ENCODE measurements at regions of chr9 and their contacts with region 1.

Region 1: GRCh38 chr9:77433675-77434445 is 214.3 kb downstream of the GNA14 start:
- ATAC-seq: peak; percentile 85 to 98 (median 98)
- H3K4me3 ChIP-seq: no peak overlapping the region
- H3K27ac ChIP-seq: no peak overlapping the region
- H3K4me1 ChIP-seq: no peaks in the 10 kb centered on the region

Region 2: DNA sequence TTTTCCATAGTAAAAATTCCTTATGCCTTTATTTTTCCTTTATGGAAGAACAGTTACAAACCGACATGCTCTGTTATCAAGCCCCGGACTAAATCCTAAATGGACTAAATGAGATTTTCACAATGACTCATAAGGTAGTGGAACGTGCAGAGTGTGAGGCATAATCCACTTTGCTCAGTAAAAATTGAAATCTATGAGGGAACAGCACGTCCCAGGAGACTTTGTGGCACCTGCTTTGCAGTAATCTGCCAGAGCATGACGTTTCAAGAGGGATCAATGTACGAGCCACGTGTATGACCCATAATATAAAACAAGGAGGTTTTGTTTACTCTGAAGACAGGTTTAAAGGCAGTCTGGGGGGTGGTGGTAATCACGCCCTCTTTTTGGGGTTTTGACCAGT is 298.1 kb after region 1 on chr9:
- in situ Hi-C with region 1: loop called in 1 of 9 experiments (anchors 25 kb)
- ATAC-seq: peak in 2 of 8 experiments; percentile 58 to 87
- H3K4me3 ChIP-seq: no peak overlapping the region
- H3K27ac ChIP-seq: no peak overlapping the region
- H3K4me1 ChIP-seq: peaks cover 0 to 3% of the 10 kb centered on the region in 2 donors

Region 3: DNA sequence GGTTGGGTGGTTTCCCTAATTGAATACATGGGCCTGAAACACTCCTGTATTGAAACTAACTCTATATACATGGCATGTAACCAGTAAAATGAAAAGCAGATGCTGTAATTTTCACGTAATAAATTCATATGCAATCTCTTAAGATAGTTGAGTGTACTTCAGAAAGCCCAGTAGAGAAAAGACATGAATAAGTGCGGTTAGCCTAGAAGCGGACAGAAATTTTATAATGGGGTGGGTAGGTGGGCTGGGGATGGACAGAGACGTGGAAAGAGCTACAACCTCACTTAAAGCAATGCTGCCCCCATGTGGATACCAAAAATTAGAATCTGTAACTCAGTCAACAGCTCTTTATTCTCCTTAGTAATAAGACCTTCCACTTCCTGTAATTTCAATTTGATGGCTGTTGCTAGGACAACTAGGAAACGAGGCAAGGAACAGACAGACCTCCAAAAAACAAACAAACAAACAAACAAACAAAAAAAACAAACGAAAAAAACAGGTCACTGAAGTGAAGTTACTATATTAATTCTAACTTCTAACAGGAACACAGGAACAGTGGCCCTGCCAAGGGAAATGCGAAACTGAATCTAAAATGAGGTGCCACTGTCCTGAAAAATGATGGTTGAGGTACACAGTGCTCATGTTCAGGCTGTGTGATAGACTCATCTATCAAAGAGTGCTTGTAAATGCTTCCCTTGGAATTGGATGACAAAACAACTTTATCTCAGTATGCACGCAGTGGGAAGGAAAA is 317.7 kb after region 1 on chr9:
- in situ Hi-C with region 1: loop called in 2 of 9 experiments (anchors 25 kb)
- ATAC-seq: peak in 6 of 8 experiments; percentile 24 to 98 (median 86)
- H3K4me3 ChIP-seq: no peak overlapping the region
- H3K27ac ChIP-seq: no peak overlapping the region
- H3K4me1 ChIP-seq: peaks cover 0 to 10% of the 10 kb centered on the region in 2 donors

Region 4: GRCh38 chr9:78035383-78035993 is 601.6 kb after region 1 on chr9:
- in situ Hi-C with region 1: loop called in 4 of 9 experiments (anchors 25 kb)
- ATAC-seq: peak in 2 of 8 experiments; percentile 0 to 1
- H3K4me3 ChIP-seq: no peak overlapping the region
- H3K27ac ChIP-seq: no peak overlapping the region
- H3K4me1 ChIP-seq: peaks cover 3 to 16% of the 10 kb centered on the region in 2 donors

Region 5: GRCh38 chr9:78235756-78236538 is 802.1 kb after region 1 on chr9 and contains the start of gene CEP78:
- in situ Hi-C with region 1: loop called in 1 of 9 experiments (anchors 25 kb)
- ATAC-seq: peak; percentile 93 to 98 (median 96)
- H3K4me3 ChIP-seq: peak within 1 kb of the TSS; percentile 68 to 91 (median 89)
- H3K27ac ChIP-seq: peak within 1 kb of the TSS; percentile 75
- H3K4me1 ChIP-seq: peaks cover 6 to 10% of the 10 kb centered on the region in 2 donors
- total RNA-seq, gene CEP78: 5.2 to 27.1 (median 15.8) TPM

Measured in motor neuron (in vitro differentiated cells).